Left colon (tissue), 2 donors: ENCODE measurements at regions of chr12 and their contacts with region 1.

Region 1: GRCh38 chr12:64480148-64480547 is 28.2 kb downstream of the TBK1 start:
- DNase-seq: no peak
- ATAC-seq: no peak

Region 2: DNA sequence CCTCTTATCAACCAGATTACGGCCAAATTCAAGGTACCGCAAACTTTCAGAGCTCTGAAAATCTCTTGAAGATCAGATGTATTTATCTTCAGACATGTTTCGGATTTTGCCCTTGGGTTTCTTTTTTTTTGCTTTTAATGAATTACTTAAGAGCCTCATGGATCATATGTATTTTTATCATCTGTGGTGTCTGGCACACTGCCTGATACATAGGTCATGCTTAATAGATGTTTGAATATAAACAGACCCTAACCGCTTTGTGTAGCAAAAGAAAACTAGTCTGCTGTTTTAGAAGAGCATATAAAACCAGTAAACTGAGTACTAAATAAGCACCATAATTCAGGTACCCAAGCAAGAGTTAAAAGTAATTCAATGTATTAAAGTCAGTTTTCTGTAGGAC is 48.4 kb before region 1 on chr12:
- intact Hi-C with region 1: loop called in 1 of 2 experiments (anchors 10 kb)
- DNase-seq: no peak
- ATAC-seq: no peak